ENCODE measurements at regions of chr10 and their contacts with region 1.

Region 1: DNA sequence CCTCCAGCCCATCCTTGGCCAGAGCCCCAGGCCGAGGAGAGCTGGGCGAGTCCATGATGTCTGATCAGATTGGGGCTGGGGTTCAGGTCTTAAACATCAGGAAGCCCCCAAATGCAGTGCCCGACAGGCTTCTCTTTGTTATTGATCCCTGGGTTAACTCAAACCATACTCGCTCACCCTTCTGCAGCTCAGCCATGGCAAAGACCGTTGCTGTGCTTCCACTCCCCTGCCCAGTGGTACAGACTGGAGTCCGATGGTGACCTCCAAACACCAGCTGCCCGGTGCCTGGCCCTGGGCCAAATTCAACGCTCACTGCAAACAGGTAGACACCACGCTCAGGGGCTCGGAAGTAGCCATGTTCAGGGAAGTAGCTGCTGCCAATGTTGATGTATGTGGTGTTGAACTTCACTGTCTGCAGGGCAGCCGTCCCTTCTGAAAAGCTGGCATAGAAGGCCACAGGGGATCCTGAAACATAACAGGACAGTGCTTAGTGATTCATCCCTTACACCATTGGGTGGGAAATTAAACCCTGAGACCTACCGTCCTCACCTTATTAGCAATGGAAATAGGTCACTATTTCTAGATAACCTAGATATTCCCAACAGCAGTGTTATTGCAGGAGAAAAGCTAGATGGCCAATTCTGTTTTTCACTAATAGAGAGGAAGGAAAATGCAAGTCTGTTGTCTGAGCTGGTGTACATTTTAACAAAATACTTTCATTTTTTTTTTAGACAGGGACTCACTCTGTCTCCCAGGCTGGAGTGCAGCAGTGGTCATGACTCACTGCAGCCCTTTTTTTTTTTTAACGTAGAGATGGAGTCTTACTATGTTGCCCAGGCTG is 20.5 kb downstream of the MMRN2 start:
- DNase-seq: no peak
- H3K4me3 Mint-ChIP-seq: no peak overlapping the region
- H3K27ac Mint-ChIP-seq: no peak overlapping the region
- H3K4me1 Mint-ChIP-seq: peaks cover 19% of the 10 kb centered on the region
- H3K27me3 Mint-ChIP-seq: peaks cover 17% of the 10 kb centered on the region

Region 2: DNA sequence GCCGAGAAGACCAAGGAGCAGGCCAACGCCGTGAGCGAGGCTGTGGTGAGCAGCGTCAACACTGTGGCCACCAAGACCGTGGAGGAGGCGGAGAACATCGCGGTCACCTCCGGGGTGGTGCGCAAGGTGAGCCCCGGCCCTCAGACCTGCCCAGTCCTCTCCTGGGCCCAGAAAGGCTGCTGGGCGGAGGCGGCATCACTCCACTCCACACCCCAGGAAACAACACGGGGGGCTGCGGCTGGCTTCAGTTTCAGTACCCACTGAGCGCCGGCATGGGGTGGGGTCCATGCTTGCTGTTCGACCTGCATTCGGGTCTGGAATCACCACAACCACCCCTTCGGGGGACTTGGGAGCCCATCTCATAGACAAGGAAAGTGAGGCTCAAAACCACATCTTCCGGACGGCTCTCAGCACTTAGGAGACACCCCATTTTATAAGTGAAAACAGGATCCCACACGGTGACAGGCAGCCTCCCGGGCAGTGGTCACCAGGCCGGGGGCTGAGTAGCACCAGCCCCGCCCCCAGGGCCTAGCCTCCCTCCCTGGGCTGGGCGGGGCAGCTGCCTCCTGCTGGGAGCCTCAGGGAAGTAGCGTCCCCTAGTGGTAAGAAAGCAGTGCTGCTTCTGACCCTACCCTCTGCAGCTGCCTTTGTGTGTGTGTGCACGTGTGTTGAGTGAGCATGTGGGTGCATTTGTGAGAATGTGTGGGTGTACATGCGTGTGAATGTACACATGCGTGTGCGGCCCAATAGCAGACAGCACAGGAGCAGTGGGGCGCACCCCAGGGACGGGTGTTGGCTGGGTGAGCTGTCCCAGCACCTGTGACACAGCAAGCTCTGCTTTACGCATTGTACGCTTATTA is 23.4 kb after region 1 on chr10:
- CTCF ChIA-PET with region 1: interaction called, 46 read pairs
- DNase-seq: peak; percentile 62
- H3K4me3 Mint-ChIP-seq: no peak overlapping the region
- H3K27ac Mint-ChIP-seq: no peak overlapping the region
- H3K4me1 Mint-ChIP-seq: peaks cover 8% of the 10 kb centered on the region
- H3K27me3 Mint-ChIP-seq: peaks cover 4% of the 10 kb centered on the region

Region 3: GRCh38 chr10:86970162-86970981 is 33.5 kb after region 1 on chr10:
- CTCF ChIA-PET with region 1: interaction called, 46 read pairs
- DNase-seq: no peak
- H3K4me3 Mint-ChIP-seq: peak overlapping the region; percentile 65
- H3K27ac Mint-ChIP-seq: peak overlapping the region; percentile 75
- H3K4me1 Mint-ChIP-seq: peaks cover 43% of the 10 kb centered on the region
- H3K27me3 Mint-ChIP-seq: peaks cover 84% of the 10 kb centered on the region

Measured in activated naive CD4-positive, alpha-beta T cell treated with anti-CD3 and anti-CD28 coated beads, Interleukin-2, amount 10 ng/mL, durations not matched to agents 7 days and 5 days (primary cell).